MCF 10A (cell line): ENCODE measurements at regions of chr19 and their contacts with region 1.

Region 1: DNA sequence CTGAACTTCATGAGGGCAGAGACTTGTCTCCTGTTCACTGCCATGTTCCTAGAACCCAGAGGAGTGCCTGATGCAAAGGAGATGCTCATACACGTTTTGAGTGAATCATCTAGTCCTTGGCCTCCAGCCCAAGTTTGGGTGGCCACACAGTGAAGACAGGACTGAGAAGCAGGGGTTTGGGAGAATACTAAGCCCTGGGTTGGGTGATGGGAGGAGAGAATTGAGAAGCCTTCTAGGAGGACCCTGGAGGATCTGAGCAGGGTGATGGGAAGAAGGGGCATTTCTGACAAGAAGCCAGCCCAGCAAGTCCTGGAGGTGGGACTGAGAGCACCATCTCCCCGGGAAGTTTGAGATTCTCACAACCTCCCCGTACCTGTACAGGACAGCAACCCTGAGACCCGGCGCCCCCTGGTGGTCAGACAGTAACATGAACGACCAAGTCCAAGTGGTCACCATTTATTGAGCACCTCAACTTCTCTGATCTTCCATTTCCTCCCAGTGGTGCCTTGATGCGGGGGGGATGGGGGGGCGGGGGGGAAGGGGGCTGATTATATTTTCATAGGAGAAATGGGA is 11.0 kb downstream of the CTU1 start:
- DNase-seq: peak; percentile 87
- H3K4me3 Mint-ChIP-seq: no peak overlapping the region
- H3K27ac Mint-ChIP-seq: no peak overlapping the region
- H3K4me1 Mint-ChIP-seq: peaks cover 20% of the 10 kb centered on the region
- H3K27me3 Mint-ChIP-seq: no peaks in the 10 kb centered on the region
- CTCF ChIP-seq: peak; percentile 53

Region 2: DNA sequence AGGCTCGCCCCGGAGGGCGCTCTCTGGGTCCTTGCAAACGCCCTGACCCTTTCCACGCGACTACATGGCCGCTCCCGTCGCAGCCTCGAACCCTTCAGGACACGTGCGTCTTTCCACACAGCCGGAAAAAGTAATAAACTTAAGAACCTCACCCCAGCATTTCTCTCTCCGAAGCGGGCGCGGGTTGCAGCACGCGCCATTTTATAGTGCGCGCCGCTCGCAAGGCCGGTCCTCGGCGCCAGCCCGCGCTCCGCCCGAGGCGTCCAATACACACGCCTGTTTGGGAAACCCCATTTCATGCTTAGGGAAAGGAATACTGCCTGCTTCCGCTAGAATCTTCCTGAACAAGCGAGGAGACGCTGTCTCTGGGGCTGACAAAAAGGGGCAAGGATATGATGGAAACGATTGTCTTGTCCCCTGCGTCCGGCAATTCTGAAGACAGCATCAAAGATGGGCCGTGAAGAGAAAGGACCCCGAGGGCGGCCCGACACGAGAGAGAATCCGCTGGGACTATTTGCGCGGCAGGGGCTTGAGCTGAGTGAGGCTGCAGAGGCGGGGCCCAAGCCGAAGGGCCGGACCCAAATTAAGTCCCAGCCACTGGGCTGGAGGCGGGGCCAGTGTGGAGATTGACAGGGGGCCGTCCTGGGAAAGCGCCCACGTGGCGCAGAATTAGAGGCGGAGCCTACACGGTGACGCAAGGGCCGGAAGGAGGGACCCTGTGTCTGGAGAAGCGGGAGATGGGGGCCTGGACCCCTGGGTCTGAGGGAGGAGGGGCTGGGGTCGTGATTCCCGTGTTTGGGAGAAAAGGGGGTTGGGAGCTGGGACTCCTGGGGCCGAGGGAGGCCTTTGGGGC is 292.6 kb before region 1 on chr19:
- CTCF ChIA-PET with region 1: no interaction called
- POLR2A ChIA-PET with region 1: interaction called, 4 read pairs
- intact Hi-C with region 1: loop called (anchors 10 kb)
- DNase-seq: peak; percentile 99
- H3K4me3 Mint-ChIP-seq: peak overlapping the region; percentile 99
- H3K27ac Mint-ChIP-seq: peak overlapping the region; percentile 99
- H3K4me1 Mint-ChIP-seq: peaks cover 21% of the 10 kb centered on the region
- H3K27me3 Mint-ChIP-seq: no peaks in the 10 kb centered on the region
- CTCF ChIP-seq: no peak

Region 3: DNA sequence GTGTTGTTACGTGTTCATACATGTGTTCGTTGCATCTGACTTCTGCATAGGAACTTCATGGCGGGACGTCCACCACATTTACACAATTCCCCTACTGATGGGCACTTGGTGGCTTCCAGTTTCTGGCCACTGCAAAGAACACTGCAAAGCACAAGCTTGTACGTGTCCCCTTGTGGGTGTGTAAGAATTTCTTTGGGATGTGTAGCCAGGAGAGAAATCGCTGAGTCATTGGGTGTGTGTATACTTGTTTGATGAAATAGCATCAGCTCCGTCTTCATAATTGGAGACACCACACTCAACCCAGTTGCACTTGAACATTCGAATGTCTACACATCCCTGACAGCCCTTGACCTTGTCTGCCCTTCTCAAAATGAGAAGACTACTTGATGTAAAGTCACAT is 163.6 kb before region 1 on chr19:
- CTCF ChIA-PET with region 1: interaction called, 3 read pairs
- POLR2A ChIA-PET with region 1: no interaction called
- intact Hi-C with region 1: loop called (anchors 2 kb)
- DNase-seq: peak; percentile 60
- H3K4me3 Mint-ChIP-seq: no peak overlapping the region
- H3K27ac Mint-ChIP-seq: peak overlapping the region; percentile 54
- H3K4me1 Mint-ChIP-seq: peaks cover 28% of the 10 kb centered on the region
- H3K27me3 Mint-ChIP-seq: peaks cover 16% of the 10 kb centered on the region
- CTCF ChIP-seq: no peak

Region 4: GRCh38 chr19:51016798-51017683 is 80.2 kb before region 1 on chr19:
- CTCF ChIA-PET with region 1: interaction called, 28 read pairs
- POLR2A ChIA-PET with region 1: interaction called, 8 read pairs
- intact Hi-C with region 1: loop called (anchors 1 kb)
- DNase-seq: no peak
- H3K4me3 Mint-ChIP-seq: peak overlapping the region; percentile 3
- H3K27ac Mint-ChIP-seq: no peak overlapping the region
- H3K4me1 Mint-ChIP-seq: peaks cover 7% of the 10 kb centered on the region
- H3K27me3 Mint-ChIP-seq: peaks cover 40% of the 10 kb centered on the region
- CTCF ChIP-seq: peak; percentile 59

Region 5: DNA sequence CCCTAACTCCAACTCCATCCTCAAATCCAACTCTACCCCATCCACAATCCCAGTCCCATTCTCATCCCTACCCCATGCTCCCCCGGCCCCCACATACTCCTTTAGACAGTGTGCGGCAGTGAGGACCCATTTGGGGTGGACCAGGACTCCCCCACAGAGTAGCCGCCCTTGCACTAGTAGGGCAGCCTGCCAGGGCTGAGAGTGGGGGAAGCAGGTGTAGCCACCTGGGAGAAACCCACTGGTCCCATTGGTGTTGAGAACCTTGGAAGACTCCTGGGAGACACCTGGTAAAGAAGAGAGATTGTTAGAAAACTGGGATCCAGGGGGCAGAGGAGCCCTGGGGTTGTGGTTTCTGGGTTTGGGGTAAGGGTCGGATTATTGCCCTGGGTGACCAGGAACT is 36.9 kb before region 1 on chr19:
- CTCF ChIA-PET with region 1: no interaction called
- POLR2A ChIA-PET with region 1: no interaction called
- intact Hi-C with region 1: no loop called
- DNase-seq: no peak
- H3K4me3 Mint-ChIP-seq: no peak overlapping the region
- H3K27ac Mint-ChIP-seq: no peak overlapping the region
- H3K4me1 Mint-ChIP-seq: no peaks in the 10 kb centered on the region
- H3K27me3 Mint-ChIP-seq: no peaks in the 10 kb centered on the region
- CTCF ChIP-seq: no peak